Activated CD4-positive, alpha-beta memory T cell treated with anti-CD3 and anti-CD28 coated beads for 36 hours (primary cell): ENCODE measurements at regions of chr1 and their contacts with region 1.

Region 1: DNA sequence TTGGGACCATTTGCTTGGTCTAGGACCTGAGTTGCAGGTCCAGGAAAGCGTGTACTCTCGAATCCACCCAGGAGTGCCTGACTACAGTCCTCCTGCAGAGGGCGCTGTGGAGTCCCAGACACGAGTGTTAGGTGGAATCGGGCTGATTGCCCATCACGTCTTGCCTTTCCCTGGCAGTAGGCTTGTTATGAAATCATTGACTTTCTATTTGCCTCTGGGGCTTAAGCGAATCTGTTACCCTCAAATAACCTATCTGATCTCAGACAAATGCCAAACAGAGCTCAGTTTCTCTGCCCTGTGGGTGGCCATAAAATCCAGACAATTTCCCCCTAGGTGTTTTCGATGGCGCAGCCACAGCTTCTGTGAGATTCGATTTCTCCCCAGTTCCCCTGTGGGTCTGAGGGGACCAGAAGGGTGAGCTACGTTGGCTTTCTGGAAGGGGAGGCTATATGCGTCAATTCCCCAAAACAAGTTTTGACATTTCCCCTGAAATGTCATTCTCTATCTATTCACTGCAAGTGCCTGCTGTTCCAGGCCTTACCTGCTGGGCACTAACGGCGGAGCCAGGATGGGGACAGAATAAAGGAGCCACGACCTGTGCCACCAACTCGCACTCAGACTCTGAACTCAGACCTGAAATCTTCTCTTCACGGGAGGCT is at the start of gene IL20:
- DNase-seq: peak; percentile 93
- H3K4me3 Mint-ChIP-seq: no peak within 1 kb of the TSS
- H3K27ac Mint-ChIP-seq: no peak within 1 kb of the TSS
- H3K4me1 Mint-ChIP-seq: peaks cover 16% of the 10 kb centered on the region
- H3K27me3 Mint-ChIP-seq: peaks cover 10% of the 10 kb centered on the region
- total RNA-seq, gene IL20: not detected

Region 2: DNA sequence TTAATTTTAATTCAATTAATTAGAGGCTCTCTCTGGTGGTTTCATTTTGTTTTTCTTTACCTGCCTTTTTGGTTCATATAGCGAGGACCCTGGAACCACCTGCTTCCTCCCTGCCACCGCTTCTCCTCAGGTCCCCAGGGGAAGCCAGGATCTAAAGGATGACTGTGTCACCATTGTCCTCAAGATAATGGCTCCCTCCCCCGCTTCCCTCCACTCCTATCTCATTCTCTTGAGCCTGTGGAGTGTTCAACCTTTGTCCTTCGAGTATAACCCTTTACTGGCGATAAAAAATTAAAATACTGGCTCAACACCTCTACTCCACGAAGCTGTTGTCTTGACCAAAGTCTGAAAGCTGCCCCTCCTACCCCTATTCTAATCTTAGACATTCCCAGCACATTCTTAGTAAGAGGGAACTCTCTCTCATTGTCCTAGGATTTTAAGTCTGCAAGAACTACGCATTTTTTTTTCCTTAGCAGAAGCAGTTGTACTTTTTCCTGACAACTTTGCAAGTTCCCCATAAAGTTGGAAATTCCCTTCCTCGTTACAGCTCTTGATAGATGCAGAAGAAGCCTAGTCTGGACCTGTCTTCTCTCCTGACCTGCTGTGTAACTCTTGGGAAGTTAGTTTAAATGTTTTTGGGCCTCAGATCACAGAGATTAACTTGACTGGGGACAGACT is 193.0 kb before region 1 on chr1:
- CTCF ChIA-PET with region 1: no interaction called
- POLR2A ChIA-PET with region 1: no interaction called
- intact Hi-C with region 1: no loop called
- DNase-seq: no peak
- H3K4me3 Mint-ChIP-seq: no peak overlapping the region
- H3K27ac Mint-ChIP-seq: no peak overlapping the region
- H3K4me1 Mint-ChIP-seq: peaks cover 11% of the 10 kb centered on the region
- H3K27me3 Mint-ChIP-seq: no peaks in the 10 kb centered on the region

Region 3: GRCh38 chr1:206816390-206817287 is 48.5 kb before region 1 on chr1:
- CTCF ChIA-PET with region 1: interaction called, 6 read pairs
- POLR2A ChIA-PET with region 1: no interaction called
- intact Hi-C with region 1: loop called (anchors 2 kb)
- DNase-seq: peak; percentile 43
- H3K4me3 Mint-ChIP-seq: peak overlapping the region; percentile 20
- H3K27ac Mint-ChIP-seq: peak overlapping the region; percentile 77
- H3K4me1 Mint-ChIP-seq: peaks cover 26% of the 10 kb centered on the region
- H3K27me3 Mint-ChIP-seq: no peaks in the 10 kb centered on the region

Region 4: GRCh38 chr1:206882519-206882918 is 17.4 kb after region 1 on chr1:
- CTCF ChIA-PET with region 1: interaction called, 9 read pairs
- POLR2A ChIA-PET with region 1: interaction called, 3 read pairs
- intact Hi-C with region 1: loop called (anchors 2 kb)
- DNase-seq: no peak
- H3K4me3 Mint-ChIP-seq: no peak overlapping the region
- H3K27ac Mint-ChIP-seq: no peak overlapping the region
- H3K4me1 Mint-ChIP-seq: peaks cover 17% of the 10 kb centered on the region
- H3K27me3 Mint-ChIP-seq: peaks cover 4% of the 10 kb centered on the region

Region 5: GRCh38 chr1:206918076-206918475 is 52.9 kb after region 1 on chr1:
- CTCF ChIA-PET with region 1: interaction called, 71 read pairs
- POLR2A ChIA-PET with region 1: no interaction called
- intact Hi-C with region 1: no loop called
- DNase-seq: no peak
- H3K4me3 Mint-ChIP-seq: peak overlapping the region; percentile 59
- H3K27ac Mint-ChIP-seq: peak overlapping the region; percentile 74
- H3K4me1 Mint-ChIP-seq: peaks cover 68% of the 10 kb centered on the region
- H3K27me3 Mint-ChIP-seq: no peaks in the 10 kb centered on the region

Region 6: DNA sequence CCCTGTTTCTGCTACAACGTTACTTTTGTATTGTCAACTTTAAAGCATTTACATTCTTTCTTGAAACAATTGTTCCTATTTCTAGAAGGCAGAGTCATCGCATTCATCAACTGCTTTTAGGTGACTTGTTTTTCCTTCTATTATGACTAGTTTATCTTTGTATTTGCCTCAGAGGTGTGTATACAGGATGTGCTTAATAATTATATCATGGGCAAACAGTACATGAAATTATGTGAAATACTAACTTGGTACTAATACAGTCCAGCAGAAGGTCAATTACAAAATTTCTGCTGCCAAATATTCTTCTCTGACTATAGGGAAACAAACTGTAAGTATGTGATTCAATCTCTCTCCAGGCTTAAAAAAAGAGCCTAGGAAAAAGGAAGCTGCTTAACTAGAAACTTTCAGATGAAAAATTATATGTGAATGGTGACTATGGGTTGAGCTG is 340.5 kb after region 1 on chr1:
- CTCF ChIA-PET with region 1: no interaction called
- POLR2A ChIA-PET with region 1: no interaction called
- intact Hi-C with region 1: no loop called
- DNase-seq: no peak
- H3K4me3 Mint-ChIP-seq: no peak overlapping the region
- H3K27ac Mint-ChIP-seq: no peak overlapping the region
- H3K4me1 Mint-ChIP-seq: peaks cover 4% of the 10 kb centered on the region
- H3K27me3 Mint-ChIP-seq: peaks cover 1% of the 10 kb centered on the region